Activated CD4-positive, alpha-beta T cell treated with anti-CD3 and anti-CD28 coated beads, Interleukin-2, amount 10 ng/mL, durations not matched to agents 24 days and 14 days (primary cell): ENCODE measurements at regions of chr7 and their contacts with region 1.

Region 1: GRCh38 chr7:143372070-143372469 is 9.1 kb upstream of the ZYX start:
- DNase-seq: peak; percentile 69
- H3K4me3 Mint-ChIP-seq: no peak overlapping the region
- H3K27ac Mint-ChIP-seq: peak overlapping the region; percentile 73
- H3K4me1 Mint-ChIP-seq: peaks cover 34% of the 10 kb centered on the region
- H3K27me3 Mint-ChIP-seq: peaks cover 14% of the 10 kb centered on the region

Region 2: GRCh38 chr7:143345428-143345900 is 26.6 kb before region 1 on chr7:
- intact Hi-C with region 1: no loop called
- DNase-seq: peak; percentile 90
- H3K4me3 Mint-ChIP-seq: peak overlapping the region; percentile 77
- H3K27ac Mint-ChIP-seq: peak overlapping the region; percentile 52
- H3K4me1 Mint-ChIP-seq: peaks cover 18% of the 10 kb centered on the region
- H3K27me3 Mint-ChIP-seq: peaks cover 50% of the 10 kb centered on the region

Region 3: DNA sequence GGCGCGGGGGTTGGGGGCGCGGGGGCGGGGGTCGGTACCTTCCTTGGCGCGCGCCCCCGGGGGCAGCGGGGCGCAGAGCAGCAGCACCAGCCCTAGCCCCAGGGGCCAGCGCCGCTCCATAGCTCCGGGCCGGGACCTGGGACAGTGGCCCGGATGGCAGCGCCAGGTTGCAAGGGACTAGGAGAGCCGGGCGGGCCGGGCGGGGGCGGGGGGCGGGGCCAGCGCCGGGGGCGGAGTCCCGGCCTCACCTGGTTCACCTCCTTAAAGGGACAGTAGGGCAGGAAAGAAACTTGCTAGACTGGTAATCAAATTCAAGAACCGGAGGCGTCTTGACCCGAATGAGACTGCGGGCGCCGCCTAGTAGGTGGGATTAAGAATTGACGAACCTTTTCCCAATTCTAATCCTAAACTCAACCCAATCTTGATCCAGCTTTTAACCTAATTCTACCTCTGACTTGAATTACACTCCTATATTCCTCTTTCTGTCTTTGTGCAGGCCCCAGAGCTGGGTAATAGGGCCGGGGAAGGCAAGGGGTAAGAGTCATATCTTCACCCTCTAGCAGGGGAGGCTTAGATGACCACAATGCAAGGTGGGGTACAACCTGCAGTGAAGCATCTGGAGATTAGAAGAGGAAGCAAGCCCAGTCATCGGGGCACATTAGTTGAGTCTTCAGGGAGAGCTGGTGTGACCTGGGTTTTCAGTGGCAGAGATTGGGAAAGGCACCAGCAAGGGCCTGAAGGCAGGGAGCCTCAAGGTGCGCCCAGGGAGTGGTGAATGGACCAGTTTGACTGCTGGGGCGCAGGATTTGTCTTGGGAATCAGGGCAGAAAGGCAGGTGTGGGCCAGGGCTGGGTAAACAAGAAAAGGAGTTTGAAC is 36.9 kb after region 1 on chr7 and contains the start of gene EPHA1:
- intact Hi-C with region 1: loop called (anchors 5 kb)
- DNase-seq: peak; percentile 73
- H3K4me3 Mint-ChIP-seq: peak within 1 kb of the TSS; percentile 83
- H3K27ac Mint-ChIP-seq: peak within 1 kb of the TSS; percentile 46
- H3K4me1 Mint-ChIP-seq: peaks cover 28% of the 10 kb centered on the region
- H3K27me3 Mint-ChIP-seq: peaks cover 15% of the 10 kb centered on the region
- total RNA-seq, gene EPHA1: 0.09 and 0.26 TPM in 2 replicates